ENCODE measurements at regions of chr1 and their contacts with region 1.

Region 1: GRCh38 chr1:77671836-77672235 is 10.6 kb downstream of the ZZZ3 start:
- DNase-seq: no peak

Region 2: DNA sequence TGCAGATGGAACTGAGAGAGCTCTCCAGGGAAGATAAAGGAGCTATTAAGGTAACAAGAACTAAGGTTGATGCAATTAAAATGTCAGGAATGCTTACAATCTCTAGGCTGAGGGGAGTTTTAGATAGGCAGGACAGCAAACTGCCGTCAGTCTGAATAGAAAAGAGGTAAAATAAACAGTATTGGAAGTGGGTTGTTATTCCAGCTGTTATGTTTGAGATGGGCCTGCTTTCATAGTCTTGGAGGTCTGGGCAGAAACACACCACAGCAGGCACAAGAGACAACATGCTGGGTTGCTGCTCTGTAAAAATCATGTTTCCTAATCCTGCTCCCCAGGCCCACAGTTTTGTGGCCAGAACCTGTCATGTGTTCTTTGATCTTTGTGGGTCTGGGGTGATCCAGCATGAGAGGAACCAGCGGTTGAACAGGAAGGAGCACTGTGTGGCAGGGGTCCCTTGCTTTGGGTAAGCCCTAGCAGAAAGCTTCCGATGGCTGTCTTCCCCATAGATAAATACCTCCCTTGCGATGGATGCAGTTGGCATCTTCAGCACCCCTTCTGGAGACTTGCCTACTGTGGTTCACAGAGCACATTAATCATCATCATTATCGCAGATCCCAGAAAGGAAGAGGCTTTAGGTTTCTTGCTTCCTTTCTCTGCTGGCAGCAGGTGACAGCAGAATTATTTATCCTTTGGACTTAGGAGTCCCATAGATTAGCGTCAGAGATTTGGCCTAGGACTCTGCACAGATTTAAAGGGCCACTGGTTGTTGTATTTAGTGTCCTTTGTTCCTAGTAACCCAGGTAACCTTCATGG is 292.9 kb before region 1 on chr1:
- CTCF ChIA-PET with region 1: no interaction called
- POLR2A ChIA-PET with region 1: no interaction called
- DNase-seq: no peak

Region 3: DNA sequence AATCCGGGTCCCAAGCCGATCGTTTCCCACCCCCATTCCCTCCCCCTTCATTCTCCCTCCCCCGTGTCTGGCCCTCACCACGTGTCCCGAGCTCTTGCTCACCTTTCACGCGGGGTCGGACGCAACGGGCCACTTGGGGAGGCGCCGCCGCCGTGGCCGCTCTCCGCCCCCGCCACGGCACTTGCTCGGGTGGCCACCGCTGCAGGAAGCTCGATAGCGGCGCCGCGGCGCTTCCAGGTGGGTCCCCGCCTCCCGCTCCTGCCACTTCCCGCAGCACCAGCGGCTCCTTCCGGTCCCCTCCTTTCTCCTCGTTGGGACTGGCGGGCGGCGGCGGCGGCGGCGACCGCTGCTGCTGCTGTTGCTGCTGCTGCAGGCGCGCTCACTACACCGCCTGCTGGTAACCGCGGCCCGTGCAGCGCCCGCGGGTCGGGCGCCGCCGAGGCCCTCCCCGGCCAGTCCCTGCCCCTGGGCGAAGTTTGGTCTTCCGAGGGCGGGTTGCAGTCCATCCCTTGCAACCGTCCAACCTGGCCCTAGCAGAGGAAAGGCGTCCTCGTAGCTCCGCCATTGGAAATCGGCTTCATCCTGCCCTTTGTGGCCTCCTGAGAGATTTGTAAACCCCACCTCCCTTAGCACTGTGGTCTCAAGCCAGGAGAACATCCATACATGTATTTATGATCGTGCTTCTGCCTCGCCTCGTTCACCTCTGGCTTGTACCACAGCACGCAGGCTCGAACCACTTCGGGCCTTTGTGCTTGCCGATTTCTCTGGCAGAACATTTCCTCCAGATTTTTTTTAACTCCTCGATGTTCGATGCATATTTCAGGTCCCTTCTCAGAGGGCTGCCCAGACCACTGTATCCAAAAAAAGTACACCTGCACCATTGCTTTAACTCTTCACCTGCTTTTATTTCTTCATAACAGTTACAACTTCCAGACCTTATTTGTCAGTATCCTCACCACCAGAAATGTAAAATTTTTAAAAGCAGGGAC is 11.6 kb after region 1 on chr1:
- CTCF ChIA-PET with region 1: no interaction called
- POLR2A ChIA-PET with region 1: interaction called, 12 read pairs
- DNase-seq: peak; percentile 91

Measured in HEK293T (cell line).